ENCODE measurements at regions of chr2 and their contacts with region 1.

Region 1: GRCh38 chr2:186589612-186590349 is at the start of gene ITGAV:
- DNase-seq: peak; percentile 88
- H3K4me3 Mint-ChIP-seq: peak within 1 kb of the TSS; percentile 84
- H3K27ac Mint-ChIP-seq: peak within 1 kb of the TSS; percentile 71
- H3K4me1 Mint-ChIP-seq: peaks cover 23% of the 10 kb centered on the region
- H3K27me3 Mint-ChIP-seq: no peaks in the 10 kb centered on the region
- total RNA-seq, gene ITGAV: 4.5 to 5.0 TPM

Region 2: GRCh38 chr2:186426153-186427016 is 163.4 kb before region 1 on chr2:
- CTCF ChIA-PET with region 1: interaction called, 3 read pairs
- intact Hi-C with region 1: loop called (anchors 5 kb)
- DNase-seq: peak; percentile 31
- H3K4me3 Mint-ChIP-seq: no peak overlapping the region
- H3K27ac Mint-ChIP-seq: no peak overlapping the region
- H3K4me1 Mint-ChIP-seq: peaks cover 23% of the 10 kb centered on the region
- H3K27me3 Mint-ChIP-seq: no peaks in the 10 kb centered on the region

Region 3: GRCh38 chr2:186485871-186486650 is 103.7 kb before region 1 on chr2 and contains the start of gene ZC3H15:
- CTCF ChIA-PET with region 1: no interaction called
- intact Hi-C with region 1: loop called (anchors 1 kb)
- DNase-seq: peak; percentile 96
- H3K4me3 Mint-ChIP-seq: peak within 1 kb of the TSS; percentile 98
- H3K27ac Mint-ChIP-seq: peak within 1 kb of the TSS; percentile 98
- H3K4me1 Mint-ChIP-seq: peaks cover 60% of the 10 kb centered on the region
- H3K27me3 Mint-ChIP-seq: no peaks in the 10 kb centered on the region
- total RNA-seq, gene ZC3H15: 92.2 to 93.3 TPM

Region 4: GRCh38 chr2:186503848-186504606 is 85.8 kb before region 1 on chr2:
- CTCF ChIA-PET with region 1: interaction called, 8 read pairs
- intact Hi-C with region 1: loop called (anchors 2 kb)
- DNase-seq: no peak
- H3K4me3 Mint-ChIP-seq: no peak overlapping the region
- H3K27ac Mint-ChIP-seq: peak overlapping the region; percentile 46
- H3K4me1 Mint-ChIP-seq: peaks cover 9% of the 10 kb centered on the region
- H3K27me3 Mint-ChIP-seq: no peaks in the 10 kb centered on the region

Region 5: GRCh38 chr2:187447336-187447735 is 857.6 kb after region 1 on chr2:
- CTCF ChIA-PET with region 1: no interaction called
- intact Hi-C with region 1: loop called (anchors 2 kb)
- DNase-seq: no peak
- H3K4me3 Mint-ChIP-seq: peak overlapping the region; percentile 6
- H3K27ac Mint-ChIP-seq: no peak overlapping the region
- H3K4me1 Mint-ChIP-seq: peaks cover 4% of the 10 kb centered on the region
- H3K27me3 Mint-ChIP-seq: no peaks in the 10 kb centered on the region